H1 (cell line): ENCODE measurements at regions of chr1 and their contacts with region 1.

Region 1: DNA sequence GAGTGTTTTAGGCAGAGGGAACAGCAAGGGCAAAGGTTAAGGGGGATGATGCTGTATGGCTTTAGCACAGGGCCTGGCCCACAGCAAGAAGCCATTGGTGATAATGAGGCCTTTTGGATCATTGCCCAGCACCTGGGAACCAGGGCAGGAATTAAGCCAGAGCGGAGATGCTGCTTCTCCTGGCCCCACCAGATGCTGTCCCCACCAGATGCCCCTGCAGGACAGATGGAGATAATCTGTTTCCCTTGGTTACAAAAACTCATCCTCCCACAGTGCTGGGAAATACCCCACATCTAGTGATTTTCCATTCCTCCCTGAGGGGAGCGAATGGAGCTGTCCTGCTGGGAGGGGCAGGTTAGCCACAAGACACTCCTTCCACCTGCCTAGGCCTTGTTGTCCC is 18.8 kb downstream of the OPRD1 start:
- DNase-seq: no peak
- H3K4me3 ChIP-seq: no peak overlapping the region
- H3K27ac ChIP-seq: no peak overlapping the region
- H3K4me1 ChIP-seq: peaks cover 0 to 2% (median 0%) of the 10 kb centered on the region in 4 experiments; a peak in 3 of 7 replicates
- H3K27me3 ChIP-seq: no peaks in the 10 kb centered on the region
- CTCF ChIP-seq: no peak
- EP300 ChIP-seq: no peak
- POLR2A ChIP-seq: no peak
- RAD21 ChIP-seq: no peak

Region 2: GRCh38 chr1:28811766-28812668 is 18.8 kb before region 1 on chr1 and contains the start of gene OPRD1:
- CTCF ChIA-PET with region 1: interaction called, 10 read pairs
- POLR2A ChIA-PET with region 1: interaction called, 3 read pairs
- DNase-seq: peak in 1 of 2 experiments; percentile 76
- H3K4me3 ChIP-seq: peak within 1 kb of the TSS; percentile 29 to 60 (median 44)
- H3K27ac ChIP-seq: no peak within 1 kb of the TSS
- H3K4me1 ChIP-seq: peaks cover 0 to 16% (median 5%) of the 10 kb centered on the region in 4 experiments; a peak in 4 of 7 replicates
- H3K27me3 ChIP-seq: peaks cover 16 to 43% (median 32%) of the 10 kb centered on the region in 4 experiments
- CTCF ChIP-seq: no peak
- EP300 ChIP-seq: no peak
- POLR2A ChIP-seq: peak in 1 of 2 experiments; percentile 43; a peak in 2 of 3 replicates
- RAD21 ChIP-seq: no peak; a peak in 1 of 4 replicates
- total RNA-seq, gene OPRD1: 3.3 and 3.7 TPM in 2 replicates